ENCODE measurements at regions of chr14 and their contacts with region 1.

Region 1: DNA sequence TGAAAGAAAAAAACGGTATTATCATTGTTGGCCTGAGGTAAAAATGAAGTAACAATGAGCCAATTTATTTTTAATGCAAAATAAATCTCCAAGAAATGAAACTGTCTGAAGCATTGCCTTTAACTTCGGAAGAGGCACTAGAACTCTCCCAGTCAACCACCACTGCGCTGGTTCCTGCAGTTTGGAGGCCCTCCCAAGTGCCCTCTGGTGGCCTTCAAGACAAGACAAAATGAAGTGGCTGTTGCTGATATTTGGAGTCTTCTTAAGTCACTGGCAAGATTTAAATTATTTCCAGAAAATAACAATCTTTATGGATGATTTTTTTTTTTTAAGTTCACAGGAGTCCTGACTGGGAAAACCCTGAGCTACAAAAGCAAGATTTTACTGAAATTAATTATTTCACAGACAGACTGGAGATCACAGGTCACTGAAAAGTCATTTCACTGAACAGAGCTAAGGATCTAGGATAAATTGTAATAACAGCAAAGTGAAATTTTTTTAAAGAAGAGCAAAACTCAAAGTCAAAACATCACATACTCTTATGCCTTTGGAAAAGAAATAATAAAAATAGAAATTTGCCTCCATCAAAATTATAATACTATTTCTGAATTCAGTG is 58.2 kb downstream of the DICER1 start:
- DNase-seq: peak; percentile 7
- H3K4me3 ChIP-seq: no peak overlapping the region
- H3K27ac ChIP-seq: no peak overlapping the region
- H3K27me3 ChIP-seq: no peaks in the 10 kb centered on the region
- CTCF ChIP-seq: peak; percentile 65

Region 2: DNA sequence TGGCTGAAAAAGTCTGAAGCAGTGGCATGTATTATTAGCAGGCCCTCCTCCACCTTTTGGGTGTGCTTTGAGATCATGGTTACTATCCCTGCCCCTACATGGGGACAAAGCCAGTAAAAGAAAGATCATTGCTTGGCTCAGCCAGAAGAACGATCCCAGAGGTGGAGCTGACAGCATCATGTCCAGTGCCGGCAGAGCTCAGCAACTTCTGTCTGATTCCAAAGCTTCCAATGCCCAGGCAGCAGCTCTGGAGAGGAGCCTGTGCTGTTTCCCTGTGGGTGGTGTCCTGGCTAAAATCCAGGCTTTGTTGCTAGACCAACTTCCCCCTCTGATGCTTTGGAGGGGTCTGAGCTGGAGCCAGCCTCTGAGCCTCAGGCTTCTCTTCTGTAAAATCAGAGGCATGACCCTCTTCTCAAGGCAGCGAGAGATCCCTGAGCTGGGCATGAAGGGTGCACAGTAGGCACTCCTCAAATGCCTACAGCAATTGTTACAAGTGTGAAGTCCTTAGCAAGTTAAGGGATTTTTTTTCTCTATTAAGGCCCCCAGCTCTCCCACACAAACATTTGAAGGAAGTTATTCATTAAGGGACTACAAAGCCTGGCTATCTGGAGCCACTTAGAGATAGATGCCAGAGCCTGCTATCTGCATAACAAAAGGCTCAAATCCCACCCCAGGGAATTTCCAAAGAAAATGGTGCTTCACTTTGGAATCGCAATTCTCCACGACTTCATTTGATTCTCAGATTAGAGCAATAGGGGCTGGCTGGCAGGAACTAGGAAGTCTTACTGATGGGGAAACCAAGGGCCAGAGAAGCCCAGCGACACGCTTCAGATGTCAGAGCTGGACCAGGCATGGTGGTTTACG is 318.3 kb before region 1 on chr14:
- CTCF ChIA-PET with region 1: no interaction called
- POLR2A ChIA-PET with region 1: no interaction called
- DNase-seq: no peak
- H3K4me3 ChIP-seq: no peak overlapping the region
- H3K27ac ChIP-seq: no peak overlapping the region
- H3K27me3 ChIP-seq: no peaks in the 10 kb centered on the region
- CTCF ChIP-seq: no peak

Region 3: GRCh38 chr14:95117937-95118721 is 19.0 kb after region 1 on chr14:
- CTCF ChIA-PET with region 1: interaction called, 10 read pairs
- POLR2A ChIA-PET with region 1: no interaction called
- DNase-seq: no peak
- H3K4me3 ChIP-seq: no peak overlapping the region
- H3K27ac ChIP-seq: no peak overlapping the region
- H3K27me3 ChIP-seq: no peaks in the 10 kb centered on the region
- CTCF ChIP-seq: no peak